CD8-positive, alpha-beta memory T cell (primary cell): ENCODE measurements at regions of chr22 and their contacts with region 1.

Region 1: GRCh38 chr22:50469377-50470305 is 5.2 kb downstream of the SBF1 start:
- DNase-seq: peak; percentile 97 to 100 (median 98)
- H3K4me3 ChIP-seq: peak overlapping the region; percentile 63
- H3K4me3 Mint-ChIP-seq: peak overlapping the region; percentile 79 to 98 (median 83)
- H3K27ac ChIP-seq: peak overlapping the region; percentile 51
- H3K27ac Mint-ChIP-seq: peak overlapping the region; percentile 78 to 99 (median 97)
- H3K4me1 ChIP-seq: peaks cover 59% of the 10 kb centered on the region
- H3K4me1 Mint-ChIP-seq: peaks cover 60 to 78% (median 64%) of the 10 kb centered on the region in 3 donors
- H3K27me3 ChIP-seq: no peaks in the 10 kb centered on the region
- H3K27me3 Mint-ChIP-seq: no peaks in the 10 kb centered on the region

Region 2: DNA sequence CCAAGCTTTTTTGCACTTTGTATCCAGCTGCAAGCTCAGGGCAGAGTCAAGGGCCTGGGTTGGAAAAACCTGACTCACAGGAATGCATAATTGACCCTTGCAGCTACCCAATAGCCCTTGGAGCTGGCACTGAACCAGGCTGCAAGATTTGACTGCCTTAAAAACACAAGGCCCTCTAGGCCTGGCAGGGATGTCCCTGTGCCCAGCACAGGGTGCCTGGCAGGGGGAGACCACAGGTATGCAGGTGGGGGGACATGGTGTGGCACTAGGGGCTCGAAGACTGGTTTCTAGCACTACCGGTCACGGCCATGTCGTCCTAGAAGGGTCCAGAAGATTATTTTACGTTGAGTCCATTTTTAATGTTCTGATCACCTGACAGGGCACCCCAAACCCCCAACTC is 25.0 kb before region 1 on chr22:
- CTCF ChIA-PET with region 1: interaction called, 14 read pairs
- POLR2A ChIA-PET with region 1: interaction called, 10 read pairs
- DNase-seq: no peak
- H3K4me3 ChIP-seq: no peak overlapping the region
- H3K4me3 Mint-ChIP-seq: peak overlapping the region in 4 of 7 donors; percentile 45 to 62 (median 55)
- H3K27ac ChIP-seq: no peak overlapping the region
- H3K27ac Mint-ChIP-seq: peak overlapping the region in 7 of 8 donors; percentile 63 to 95 (median 84)
- H3K4me1 ChIP-seq: peaks cover 19% of the 10 kb centered on the region
- H3K4me1 Mint-ChIP-seq: peaks cover 25 to 40% (median 27%) of the 10 kb centered on the region in 3 donors
- H3K27me3 ChIP-seq: no peaks in the 10 kb centered on the region
- H3K27me3 Mint-ChIP-seq: no peaks in the 10 kb centered on the region